HepG2 (cell line): ENCODE measurements at regions of chr9 and their contacts with region 1.

Region 1: GRCh38 chr9:87238545-87238944 is 259.1 kb upstream of the DAPK1 start:
- DNase-seq: no peak
- ATAC-seq: no peak
- H3K4me3 ChIP-seq: no peak overlapping the region
- H3K27ac ChIP-seq: no peak overlapping the region
- H3K4me1 ChIP-seq: no peaks in the 10 kb centered on the region
- H3K27me3 ChIP-seq: peaks cover 2 to 12% of the 10 kb centered on the region in 2 experiments; a peak in 3 of 5 replicates
- CTCF ChIP-seq: no peak
- EP300 ChIP-seq: no peak
- POLR2A ChIP-seq: no peak
- RAD21 ChIP-seq: no peak

Region 2: GRCh38 chr9:87179573-87180340 is 58.8 kb before region 1 on chr9:
- CTCF ChIA-PET with region 1: no interaction called
- POLR2A ChIA-PET with region 1: no interaction called
- in situ Hi-C with region 1: loop called (anchors 10 kb)
- intact Hi-C with region 1: no loop called
- DNase-seq: no peak
- ATAC-seq: no peak
- H3K4me3 ChIP-seq: no peak overlapping the region
- H3K27ac ChIP-seq: no peak overlapping the region
- H3K4me1 ChIP-seq: no peaks in the 10 kb centered on the region
- H3K27me3 ChIP-seq: 0 out of 5 replicates have a peak, but pooled peaks cover 0 to 5% of the 10 kb centered on the region in 2 experiments
- CTCF ChIP-seq: no peak
- EP300 ChIP-seq: no peak
- POLR2A ChIP-seq: no peak
- RAD21 ChIP-seq: no peak